ENCODE measurements at regions of chr11 and their contacts with region 1.

Region 1: GRCh38 chr11:33716236-33716635 is 15.6 kb upstream of the C11orf91 start:
- DNase-seq: no peak
- ATAC-seq: peak; percentile 76
- H3K4me3 ChIP-seq: no peak overlapping the region
- H3K27ac ChIP-seq: no peak overlapping the region
- H3K4me1 ChIP-seq: no peaks in the 10 kb centered on the region
- H3K27me3 ChIP-seq: no peaks in the 10 kb centered on the region
- CTCF ChIP-seq: peak; percentile 38 to 65 (median 39); a peak in 4 of 6 replicates
- EP300 ChIP-seq: no peak
- POLR2A ChIP-seq: no peak
- RAD21 ChIP-seq: peak; percentile 72

Region 2: GRCh38 chr11:33700425-33701271 is 15.6 kb before region 1 on chr11 and contains the start of gene C11orf91:
- CTCF ChIA-PET with region 1: interaction called, 21 read pairs
- POLR2A ChIA-PET with region 1: no interaction called
- RAD21 ChIA-PET with region 1: interaction called, 4 read pairs
- SMC1A ChIA-PET with region 1: interaction called, 6 read pairs
- in situ Hi-C with region 1: no loop called
- intact Hi-C with region 1: no loop called
- DNase-seq: peak; percentile 59
- ATAC-seq: peak; percentile 98
- H3K4me3 ChIP-seq: peak within 1 kb of the TSS; percentile 71
- H3K27ac ChIP-seq: no peak within 1 kb of the TSS
- H3K4me1 ChIP-seq: peaks cover 3% of the 10 kb centered on the region; the same call in 1 of the 2 replicates
- H3K27me3 ChIP-seq: no peaks in the 10 kb centered on the region
- CTCF ChIP-seq: no peak
- EP300 ChIP-seq: no peak
- POLR2A ChIP-seq: no peak; the same call in none of the 2 replicates
- RAD21 ChIP-seq: no peak
- polyA plus RNA-seq, gene C11orf91: not detected

Region 3: GRCh38 chr11:33736148-33736809 is 20.0 kb after region 1 on chr11 and contains the start of gene CD59:
- CTCF ChIA-PET with region 1: interaction called, 276 read pairs
- POLR2A ChIA-PET with region 1: interaction called, 4 read pairs
- RAD21 ChIA-PET with region 1: interaction called, 158 read pairs
- SMC1A ChIA-PET with region 1: interaction called, 153 read pairs
- in situ Hi-C with region 1: no loop called
- intact Hi-C with region 1: no loop called
- DNase-seq: peak; percentile 54
- ATAC-seq: peak; percentile 77
- H3K4me3 ChIP-seq: peak within 1 kb of the TSS; percentile 83
- H3K27ac ChIP-seq: peak within 1 kb of the TSS; percentile 77
- H3K4me1 ChIP-seq: peaks cover 16% of the 10 kb centered on the region
- H3K27me3 ChIP-seq: no peaks in the 10 kb centered on the region
- CTCF ChIP-seq: no peak
- EP300 ChIP-seq: no peak; a peak in 1 of 4 replicates
- POLR2A ChIP-seq: peak; percentile 86
- RAD21 ChIP-seq: no peak
- polyA plus RNA-seq, gene CD59: 223 to 256 TPM

Region 4: DNA sequence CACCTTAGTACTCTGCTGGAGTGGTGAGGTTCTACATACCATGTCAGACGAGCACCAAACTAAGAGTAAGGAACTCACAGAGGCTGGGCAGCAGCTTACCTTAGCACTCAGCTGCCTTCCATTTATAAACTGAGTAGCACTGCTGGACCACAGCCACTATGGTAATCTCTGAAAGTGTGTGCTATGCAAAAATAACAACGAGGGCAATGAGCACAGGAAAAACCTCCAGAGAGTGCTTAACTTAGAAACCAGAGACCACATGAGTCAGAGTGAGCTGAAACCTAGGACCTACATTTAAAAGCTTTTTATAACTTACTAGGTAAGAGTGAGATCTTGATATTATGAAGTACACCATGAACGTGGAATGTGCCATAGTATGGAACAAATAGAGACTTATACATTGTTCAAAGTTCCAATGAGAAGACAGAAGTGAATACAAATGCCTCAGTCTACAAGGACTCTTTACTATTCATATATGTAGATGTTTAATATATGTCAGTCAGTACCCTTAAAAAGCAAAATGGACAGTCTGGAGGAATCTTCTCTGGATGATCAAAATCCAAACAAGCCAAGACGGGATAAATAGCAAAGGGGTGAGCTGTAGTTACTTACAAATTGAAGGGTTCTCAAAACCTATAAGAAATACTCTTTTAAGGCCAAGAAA is 37.2 kb after region 1 on chr11:
- CTCF ChIA-PET with region 1: interaction called, 4 read pairs
- POLR2A ChIA-PET with region 1: no interaction called
- RAD21 ChIA-PET with region 1: no interaction called
- SMC1A ChIA-PET with region 1: interaction called, 11 read pairs
- in situ Hi-C with region 1: no loop called
- intact Hi-C with region 1: no loop called
- DNase-seq: peak; percentile 70
- ATAC-seq: peak; percentile 100
- H3K4me3 ChIP-seq: 0 out of 2 replicates have a peak overlapping the region, but pooled peaks have one; percentile 20
- H3K27ac ChIP-seq: 0 out of 2 replicates have a peak overlapping the region, but pooled peaks have one; percentile 29
- H3K4me1 ChIP-seq: peaks cover 12% of the 10 kb centered on the region
- H3K27me3 ChIP-seq: no peaks in the 10 kb centered on the region
- CTCF ChIP-seq: no peak
- EP300 ChIP-seq: no peak
- POLR2A ChIP-seq: no peak
- RAD21 ChIP-seq: no peak

Region 5: GRCh38 chr11:33808228-33808828 is 92.1 kb after region 1 on chr11:
- CTCF ChIA-PET with region 1: interaction called, 13 read pairs
- POLR2A ChIA-PET with region 1: no interaction called
- RAD21 ChIA-PET with region 1: interaction called, 5 read pairs
- SMC1A ChIA-PET with region 1: interaction called, 17 read pairs
- in situ Hi-C with region 1: no loop called
- intact Hi-C with region 1: no loop called
- DNase-seq: peak; percentile 37
- ATAC-seq: peak; percentile 99
- H3K4me3 ChIP-seq: no peak overlapping the region
- H3K27ac ChIP-seq: no peak overlapping the region
- H3K4me1 ChIP-seq: no peaks in the 10 kb centered on the region
- H3K27me3 ChIP-seq: peaks cover 0 to 2% of the 10 kb centered on the region in 2 experiments; a peak in 2 of 4 replicates
- CTCF ChIP-seq: peak; percentile 82 to 92 (median 83)
- EP300 ChIP-seq: no peak
- POLR2A ChIP-seq: no peak
- RAD21 ChIP-seq: peak; percentile 78

Region 6: DNA sequence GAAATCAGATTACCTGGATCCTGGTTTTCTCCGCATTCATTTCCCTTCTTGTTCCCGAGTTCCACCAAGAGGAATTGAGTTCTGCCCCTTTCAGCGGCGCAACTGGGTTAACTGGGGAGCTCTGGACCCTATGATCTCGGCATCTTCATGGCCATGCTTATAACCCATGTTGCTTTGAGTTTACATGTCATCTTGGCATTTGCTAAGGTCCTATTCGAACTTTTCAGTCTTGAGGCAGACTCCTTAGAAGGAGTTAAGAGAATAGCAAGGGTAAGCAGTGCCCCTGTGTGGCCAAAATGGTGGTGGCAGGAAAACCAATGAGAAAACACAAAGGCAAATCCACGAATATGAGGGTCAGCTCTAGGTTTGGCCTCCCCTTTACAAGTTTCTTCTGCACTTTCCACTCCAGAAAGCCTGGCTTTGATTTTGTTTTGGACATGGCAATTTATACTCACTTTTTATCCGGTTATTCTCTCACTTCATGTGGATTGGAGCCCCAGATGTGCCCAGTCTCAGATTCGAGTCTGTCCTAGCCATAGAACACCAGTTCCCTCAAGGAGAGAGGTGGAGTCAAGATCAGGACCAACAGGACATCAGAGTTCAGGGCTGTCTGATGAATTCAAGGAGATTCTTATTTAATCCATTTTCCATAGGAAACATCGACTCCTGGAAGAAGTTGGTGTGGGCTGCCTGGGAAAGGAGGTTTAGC is 113.4 kb after region 1 on chr11:
- CTCF ChIA-PET with region 1: interaction called, 9 read pairs
- POLR2A ChIA-PET with region 1: no interaction called
- RAD21 ChIA-PET with region 1: interaction called, 5 read pairs
- SMC1A ChIA-PET with region 1: interaction called, 4 read pairs
- in situ Hi-C with region 1: no loop called
- intact Hi-C with region 1: loop called (anchors 1 kb)
- DNase-seq: peak; percentile 28
- ATAC-seq: peak; percentile 96
- H3K4me3 ChIP-seq: no peak overlapping the region; the same call in 1 of the 2 replicates
- H3K27ac ChIP-seq: no peak overlapping the region
- H3K4me1 ChIP-seq: peaks cover 4% of the 10 kb centered on the region; the same call in 1 of the 2 replicates
- H3K27me3 ChIP-seq: peaks cover 10 to 12% of the 10 kb centered on the region in 2 experiments; a peak in 3 of 4 replicates
- CTCF ChIP-seq: peak; percentile 78 to 89 (median 87)
- EP300 ChIP-seq: no peak
- POLR2A ChIP-seq: no peak
- RAD21 ChIP-seq: peak; percentile 95

Measured in GM12878 (cell line).